Esophagus muscularis mucosa (tissue), 4 donors: ENCODE measurements at regions of chr2 and their contacts with region 1.

Region 1: GRCh38 chr2:11743846-11744553 is 2.4 kb upstream of the LPIN1 start:
- DNase-seq: peak; percentile 95
- H3K4me3 ChIP-seq: peak overlapping the region; percentile 23 to 43 (median 32)
- H3K27ac ChIP-seq: peak overlapping the region; percentile 90 to 95 (median 94)
- H3K4me1 ChIP-seq: peaks cover 40 to 60% (median 57%) of the 10 kb centered on the region in 4 donors
- H3K27me3 ChIP-seq: no peaks in the 10 kb centered on the region
- CTCF ChIP-seq: peak in 1 of 3 experiments; percentile 9
- EP300 ChIP-seq: no peak
- POLR2A ChIP-seq: no peak

Region 2: GRCh38 chr2:11621410-11621809 is 122.6 kb before region 1 on chr2:
- intact Hi-C with region 1: no loop called
- DNase-seq: no peak
- H3K4me3 ChIP-seq: no peak overlapping the region
- H3K27ac ChIP-seq: no peak overlapping the region
- H3K4me1 ChIP-seq: no peaks in the 10 kb centered on the region
- H3K27me3 ChIP-seq: no peaks in the 10 kb centered on the region
- CTCF ChIP-seq: no peak
- EP300 ChIP-seq: no peak
- POLR2A ChIP-seq: no peak

Region 3: DNA sequence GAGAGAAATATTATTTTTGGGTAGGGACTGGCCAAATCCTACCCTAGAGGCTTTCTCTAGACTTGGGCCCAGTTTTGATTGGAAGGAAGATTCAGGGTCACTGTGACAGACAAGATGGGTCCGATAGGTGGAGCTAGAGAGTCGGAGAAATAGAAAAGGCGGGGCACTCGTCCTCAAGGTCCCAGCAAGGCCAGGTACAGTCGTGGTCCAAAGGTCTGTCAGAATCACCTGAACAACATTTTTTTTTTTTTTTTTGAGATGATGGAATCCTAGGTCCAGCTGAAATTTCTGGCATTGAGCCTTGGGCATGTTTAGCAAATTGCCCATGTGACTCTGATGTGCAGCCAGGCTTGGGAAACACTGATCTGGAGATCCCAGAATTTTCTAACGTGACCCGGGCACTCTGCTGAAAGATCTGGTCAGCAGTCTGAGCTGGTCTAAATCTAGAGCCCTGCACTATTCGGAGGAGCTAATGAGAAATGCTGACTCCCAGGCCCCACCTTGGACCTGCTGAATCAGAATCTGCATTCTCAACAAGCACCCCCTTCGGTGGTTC is 51.0 kb before region 1 on chr2:
- intact Hi-C with region 1: loop called (anchors 5 kb)
- DNase-seq: no peak
- H3K4me3 ChIP-seq: no peak overlapping the region
- H3K27ac ChIP-seq: no peak overlapping the region
- H3K4me1 ChIP-seq: peaks cover 32 to 41% (median 36%) of the 10 kb centered on the region in 4 donors
- H3K27me3 ChIP-seq: no peaks in the 10 kb centered on the region
- CTCF ChIP-seq: peak; percentile 66 to 79 (median 79)
- EP300 ChIP-seq: no peak
- POLR2A ChIP-seq: no peak

Region 4: GRCh38 chr2:11710234-11710975 is 33.6 kb before region 1 on chr2:
- intact Hi-C with region 1: no loop called
- DNase-seq: no peak
- H3K4me3 ChIP-seq: no peak overlapping the region
- H3K27ac ChIP-seq: peak overlapping the region; percentile 64 to 77 (median 66)
- H3K4me1 ChIP-seq: peaks cover 6 to 32% (median 25%) of the 10 kb centered on the region in 4 donors
- H3K27me3 ChIP-seq: no peaks in the 10 kb centered on the region
- CTCF ChIP-seq: no peak
- EP300 ChIP-seq: no peak
- POLR2A ChIP-seq: no peak

Region 5: GRCh38 chr2:11778923-11779757 is 35.1 kb after region 1 on chr2:
- intact Hi-C with region 1: loop called (anchors 5 kb)
- DNase-seq: peak; percentile 94
- H3K4me3 ChIP-seq: peak overlapping the region in 3 of 4 donors; percentile 12 to 24 (median 18)
- H3K27ac ChIP-seq: no peak overlapping the region
- H3K4me1 ChIP-seq: peaks cover 8 to 29% (median 18%) of the 10 kb centered on the region in 4 donors
- H3K27me3 ChIP-seq: no peaks in the 10 kb centered on the region
- CTCF ChIP-seq: peak; percentile 98 to 99 (median 99)
- EP300 ChIP-seq: no peak
- POLR2A ChIP-seq: no peak

Region 6: GRCh38 chr2:12282780-12283695 is 539.0 kb after region 1 on chr2:
- intact Hi-C with region 1: no loop called
- DNase-seq: no peak
- H3K4me3 ChIP-seq: no peak overlapping the region
- H3K27ac ChIP-seq: no peak overlapping the region
- H3K4me1 ChIP-seq: peaks cover 0 to 10% (median 5%) of the 10 kb centered on the region in 4 donors
- H3K27me3 ChIP-seq: no peaks in the 10 kb centered on the region
- CTCF ChIP-seq: no peak
- EP300 ChIP-seq: no peak
- POLR2A ChIP-seq: no peak